Activated CD8-positive, alpha-beta memory T cell treated with anti-CD3 and anti-CD28 coated beads, Interleukin-2, amount 10 ng/mL, durations not matched to agents 7 days and 5 days (primary cell): ENCODE measurements at regions of chr2 and their contacts with region 1.

Region 1: GRCh38 chr2:17719562-17720371 is 33.8 kb downstream of the SMC6 start:
- DNase-seq: no peak
- ATAC-seq: no peak
- H3K4me3 Mint-ChIP-seq: no peak overlapping the region
- H3K27ac Mint-ChIP-seq: peak overlapping the region; percentile 36
- H3K4me1 Mint-ChIP-seq: no peaks in the 10 kb centered on the region
- H3K27me3 Mint-ChIP-seq: no peaks in the 10 kb centered on the region

Region 2: DNA sequence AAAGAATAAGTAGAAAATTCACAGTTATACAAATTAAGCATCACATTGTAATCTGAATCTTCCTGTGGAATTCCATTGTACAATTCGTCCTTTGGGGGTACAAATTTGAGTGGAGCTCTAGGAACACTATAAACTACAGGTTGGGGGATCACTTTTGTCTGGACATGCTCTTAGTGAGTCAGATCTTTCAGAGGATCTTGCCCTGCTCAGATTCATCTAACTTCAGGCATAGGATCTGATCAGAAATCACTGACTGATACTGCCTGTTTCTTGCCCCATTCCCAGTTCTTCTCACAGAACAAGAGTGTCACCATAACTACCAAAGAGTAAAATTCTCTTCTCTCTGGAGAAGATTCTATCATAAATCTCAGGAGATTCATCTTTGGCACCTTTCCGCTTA is 190.0 kb before region 1 on chr2:
- CTCF ChIA-PET with region 1: no interaction called
- DNase-seq: no peak
- ATAC-seq: no peak
- H3K4me3 Mint-ChIP-seq: no peak overlapping the region
- H3K27ac Mint-ChIP-seq: no peak overlapping the region
- H3K4me1 Mint-ChIP-seq: no peaks in the 10 kb centered on the region
- H3K27me3 Mint-ChIP-seq: peaks cover 4% of the 10 kb centered on the region

Region 3: DNA sequence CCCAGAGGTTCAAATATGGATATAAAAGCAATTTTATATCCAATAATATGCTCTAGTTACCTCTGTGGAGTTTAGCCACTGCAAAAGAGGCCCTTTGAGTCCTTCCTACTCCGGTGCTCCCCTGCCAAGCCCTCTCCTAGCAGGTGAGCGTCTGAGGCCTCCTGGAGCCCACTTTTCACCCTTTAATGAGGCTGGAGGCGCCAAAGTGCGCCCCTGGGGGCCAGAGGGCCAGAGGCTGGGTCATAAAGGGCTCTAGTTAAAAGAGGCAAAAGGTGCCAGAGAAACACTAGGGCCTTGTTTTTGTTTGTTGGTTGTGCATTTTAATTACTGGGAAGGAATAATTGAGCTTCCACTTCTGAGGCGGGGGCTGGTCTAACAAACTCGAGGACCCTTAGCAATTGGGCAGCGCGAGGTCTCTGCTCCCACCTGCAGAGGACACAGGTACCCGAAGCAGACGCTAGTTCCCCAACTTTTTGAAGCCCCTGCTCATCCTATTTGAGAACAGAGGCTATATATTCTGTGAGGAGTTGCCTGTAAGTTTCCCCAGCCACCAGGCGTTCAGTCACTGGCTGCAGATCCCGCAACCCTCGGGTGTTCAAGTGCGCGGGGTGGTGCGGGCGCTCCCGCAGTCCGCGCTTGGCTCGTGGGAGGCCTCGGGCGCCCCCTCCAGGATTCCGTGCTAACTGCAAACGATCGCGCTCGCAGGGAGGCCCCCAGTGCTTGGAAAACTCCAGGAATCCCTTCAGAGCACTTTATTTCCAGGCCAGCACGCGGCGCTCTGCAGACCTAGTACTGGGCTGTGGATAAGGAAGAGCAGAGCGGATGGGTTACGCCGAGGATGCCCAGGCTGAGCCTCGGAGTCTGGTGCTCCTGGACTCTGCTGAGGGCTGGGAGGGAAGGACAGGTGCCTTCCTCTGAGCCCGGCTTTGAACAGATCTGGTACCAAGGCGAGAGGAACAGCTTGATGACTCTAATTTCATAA is 110.6 kb after region 1 on chr2:
- CTCF ChIA-PET with region 1: interaction called, 12 read pairs
- DNase-seq: peak; percentile 53
- ATAC-seq: peak; percentile 86
- H3K4me3 Mint-ChIP-seq: no peak overlapping the region
- H3K27ac Mint-ChIP-seq: no peak overlapping the region
- H3K4me1 Mint-ChIP-seq: peaks cover 1% of the 10 kb centered on the region
- H3K27me3 Mint-ChIP-seq: peaks cover 44% of the 10 kb centered on the region